ENCODE measurements at regions of chr2 and their contacts with region 1.

Region 1: DNA sequence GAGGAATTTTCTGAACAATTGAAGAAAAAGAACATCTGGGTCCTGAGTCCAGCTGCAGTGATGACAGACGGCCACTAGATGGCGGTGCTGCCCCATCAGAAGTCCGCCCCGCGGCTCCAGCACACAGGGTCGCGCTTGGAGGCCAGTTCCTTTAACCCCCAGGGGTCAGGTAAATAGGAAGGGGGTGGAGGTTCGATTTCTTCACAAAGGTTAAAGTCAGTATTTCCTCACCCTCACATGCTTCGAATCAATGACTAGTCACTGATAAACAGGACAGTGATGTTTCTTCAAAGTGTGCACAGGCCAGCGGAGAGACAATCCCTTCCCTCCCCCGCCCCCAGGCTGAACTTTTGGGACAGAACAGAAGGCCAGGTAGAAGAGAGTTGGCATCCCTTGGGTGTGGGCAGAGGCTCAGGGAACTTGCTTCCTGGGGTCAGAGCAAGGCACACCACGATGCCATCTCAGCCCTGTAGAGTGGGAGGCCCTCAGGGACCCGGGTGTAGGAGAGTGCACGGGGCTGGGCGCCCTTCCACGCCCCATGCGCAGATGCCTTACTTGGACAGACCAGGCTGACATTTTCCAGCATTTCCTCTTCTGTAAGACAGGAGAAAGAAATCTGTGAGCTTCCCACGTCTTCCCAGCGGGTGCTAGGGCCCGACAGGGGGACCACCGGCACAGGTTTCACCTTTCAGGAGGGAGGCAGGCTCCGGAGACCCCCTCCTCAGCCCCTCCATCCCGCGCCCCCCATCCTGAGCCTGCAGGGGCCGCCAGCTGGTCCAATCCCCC is 722 bp downstream of the APOB start:
- DNase-seq: peak; percentile 45 to 55
- ATAC-seq: peak; percentile 54 to 86; a peak in 4 of 6 replicates
- H3K4me3 ChIP-seq: no peak overlapping the region
- H3K27ac ChIP-seq: no peak overlapping the region
- H3K4me1 ChIP-seq: no peaks in the 10 kb centered on the region; the same call in 2 of the 3 replicates
- CTCF ChIP-seq: peak; percentile 98
- EP300 ChIP-seq: no peak
- POLR2A ChIP-seq: no peak
- RAD21 ChIP-seq: peak; percentile 97 to 98

Region 2: GRCh38 chr2:21032338-21033236 is 10.6 kb before region 1 on chr2:
- CTCF ChIA-PET with region 1: interaction called, 18 read pairs
- POLR2A ChIA-PET with region 1: no interaction called
- DNase-seq: no peak
- ATAC-seq: no peak
- H3K4me3 ChIP-seq: no peak overlapping the region
- H3K27ac ChIP-seq: no peak overlapping the region
- H3K4me1 ChIP-seq: no peaks in the 10 kb centered on the region
- CTCF ChIP-seq: no peak
- EP300 ChIP-seq: no peak
- POLR2A ChIP-seq: no peak
- RAD21 ChIP-seq: no peak

Region 3: GRCh38 chr2:21059885-21060610 is 16.9 kb after region 1 on chr2:
- CTCF ChIA-PET with region 1: interaction called, 25 read pairs
- POLR2A ChIA-PET with region 1: no interaction called
- DNase-seq: no peak
- ATAC-seq: no peak
- H3K4me3 ChIP-seq: no peak overlapping the region
- H3K27ac ChIP-seq: no peak overlapping the region
- H3K4me1 ChIP-seq: no peaks in the 10 kb centered on the region
- CTCF ChIP-seq: no peak
- EP300 ChIP-seq: no peak
- POLR2A ChIP-seq: no peak
- RAD21 ChIP-seq: no peak

Region 4: DNA sequence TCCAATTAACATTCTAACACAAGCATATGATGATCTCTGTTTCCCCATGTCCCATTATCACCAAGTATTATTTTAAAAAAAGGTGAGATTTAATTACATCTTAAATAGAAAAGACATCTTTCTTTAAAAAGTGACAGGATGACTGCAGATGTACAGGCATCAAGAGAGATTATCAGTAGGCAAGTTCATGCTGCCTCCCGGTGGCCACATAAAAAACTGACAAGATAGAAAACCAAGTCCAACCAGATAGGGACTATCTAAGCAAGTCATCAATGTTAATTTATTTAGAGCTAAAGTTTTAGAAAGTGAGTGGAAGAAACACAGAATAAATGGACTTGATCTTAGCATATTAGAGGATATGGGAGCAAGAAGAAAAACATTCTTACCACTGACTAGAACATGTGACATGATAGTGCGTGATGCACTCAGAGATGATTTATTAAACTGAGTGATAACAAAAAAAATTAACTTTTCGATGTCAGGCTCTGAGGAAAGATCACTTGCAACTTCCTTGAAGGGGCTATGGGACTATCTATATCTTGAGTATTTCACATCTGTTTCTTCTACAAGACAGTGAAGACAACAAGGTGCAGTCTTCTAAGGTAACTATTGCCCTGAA is 75.3 kb after region 1 on chr2:
- CTCF ChIA-PET with region 1: interaction called, 130 read pairs
- POLR2A ChIA-PET with region 1: no interaction called
- DNase-seq: peak; percentile 18 to 46
- ATAC-seq: peak; percentile 91 to 92; a peak in 5 of 6 replicates
- H3K4me3 ChIP-seq: no peak overlapping the region
- H3K27ac ChIP-seq: no peak overlapping the region
- H3K4me1 ChIP-seq: no peaks in the 10 kb centered on the region
- CTCF ChIP-seq: peak; percentile 59
- EP300 ChIP-seq: no peak
- POLR2A ChIP-seq: no peak
- RAD21 ChIP-seq: peak; percentile 64 to 73

Region 5: DNA sequence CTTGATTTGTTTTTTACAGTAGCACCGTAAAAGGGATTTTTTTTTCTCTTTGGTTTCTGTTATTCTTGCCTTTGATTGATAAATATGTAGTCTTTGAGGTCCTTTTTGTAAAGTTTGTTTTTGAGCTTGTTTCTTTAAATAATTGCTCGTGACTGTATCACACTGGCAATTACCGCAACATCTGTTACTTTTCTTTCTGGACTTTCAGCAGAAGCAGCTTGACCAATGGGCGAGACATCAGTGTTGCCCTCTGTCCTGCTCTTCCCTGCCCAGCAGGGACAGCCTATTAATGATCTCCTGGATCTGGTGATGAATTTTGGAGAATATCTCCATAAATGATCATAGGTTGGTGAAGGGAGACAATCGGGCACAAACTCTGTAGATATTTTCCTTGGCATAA is 155.5 kb after region 1 on chr2:
- CTCF ChIA-PET with region 1: no interaction called
- POLR2A ChIA-PET with region 1: no interaction called
- DNase-seq: no peak
- ATAC-seq: no peak
- H3K4me3 ChIP-seq: no peak overlapping the region
- H3K27ac ChIP-seq: no peak overlapping the region
- H3K4me1 ChIP-seq: no peaks in the 10 kb centered on the region
- CTCF ChIP-seq: no peak
- EP300 ChIP-seq: no peak
- POLR2A ChIP-seq: no peak
- RAD21 ChIP-seq: no peak

Region 6: GRCh38 chr2:21317131-21317530 is 274.0 kb after region 1 on chr2:
- CTCF ChIA-PET with region 1: interaction called, 16 read pairs
- POLR2A ChIA-PET with region 1: no interaction called
- DNase-seq: peak; percentile 28 to 52
- ATAC-seq: peak in 1 of 2 experiments; percentile 86; a peak in 3 of 6 replicates
- H3K4me3 ChIP-seq: no peak overlapping the region
- H3K27ac ChIP-seq: no peak overlapping the region
- H3K4me1 ChIP-seq: no peaks in the 10 kb centered on the region
- CTCF ChIP-seq: peak; percentile 45
- EP300 ChIP-seq: no peak
- POLR2A ChIP-seq: no peak
- RAD21 ChIP-seq: peak; percentile 27 to 55; a peak in 2 of 5 replicates